H1 (cell line): ENCODE measurements at regions of chr10 and their contacts with region 1.

Region 1: GRCh38 chr10:119080521-119081260 is at the start of gene EIF3A:
- DNase-seq: peak; percentile 71 to 94
- H3K4me3 ChIP-seq: peak within 1 kb of the TSS; percentile 77 to 96 (median 90)
- H3K27ac ChIP-seq: peak within 1 kb of the TSS; percentile 97
- H3K4me1 ChIP-seq: peaks cover 0 to 3% (median 0%) of the 10 kb centered on the region in 4 experiments; a peak in 2 of 7 replicates
- H3K27me3 ChIP-seq: no peaks in the 10 kb centered on the region
- CTCF ChIP-seq: no peak
- EP300 ChIP-seq: no peak
- POLR2A ChIP-seq: peak; percentile 93
- RAD21 ChIP-seq: no peak
- total RNA-seq, gene EIF3A: 209 and 210 TPM in 2 replicates

Region 2: DNA sequence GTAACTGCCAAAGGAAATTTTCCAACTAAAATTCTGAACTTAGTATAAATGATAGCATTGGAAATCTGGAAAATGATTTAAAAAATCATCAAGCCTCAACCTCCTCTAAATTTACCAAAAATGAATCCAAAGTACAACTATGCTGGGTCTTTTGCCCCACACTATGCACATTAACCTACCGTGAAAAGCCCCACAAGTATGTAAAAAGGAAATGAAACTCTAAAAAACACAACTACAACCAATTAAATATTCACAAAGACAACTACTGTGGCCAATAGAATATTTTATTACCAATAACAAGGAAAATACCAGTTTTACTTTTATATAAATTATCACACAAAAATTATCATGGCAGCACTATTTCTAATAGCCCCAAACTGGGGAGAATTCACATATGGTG is 19.3 kb before region 1 on chr10:
- CTCF ChIA-PET with region 1: interaction called, 7 read pairs
- POLR2A ChIA-PET with region 1: interaction called, 21 read pairs
- DNase-seq: no peak
- H3K4me3 ChIP-seq: no peak overlapping the region
- H3K27ac ChIP-seq: no peak overlapping the region
- H3K4me1 ChIP-seq: no peaks in the 10 kb centered on the region
- H3K27me3 ChIP-seq: no peaks in the 10 kb centered on the region
- CTCF ChIP-seq: no peak
- EP300 ChIP-seq: no peak
- POLR2A ChIP-seq: no peak
- RAD21 ChIP-seq: no peak

Region 3: GRCh38 chr10:119090968-119091367 is 10.3 kb after region 1 on chr10:
- CTCF ChIA-PET with region 1: interaction called, 16 read pairs
- POLR2A ChIA-PET with region 1: interaction called, 15 read pairs
- DNase-seq: no peak
- H3K4me3 ChIP-seq: no peak overlapping the region
- H3K27ac ChIP-seq: no peak overlapping the region
- H3K4me1 ChIP-seq: no peaks in the 10 kb centered on the region
- H3K27me3 ChIP-seq: no peaks in the 10 kb centered on the region
- CTCF ChIP-seq: no peak
- EP300 ChIP-seq: no peak
- POLR2A ChIP-seq: no peak
- RAD21 ChIP-seq: no peak

Region 4: GRCh38 chr10:119103903-119104652 is 23.4 kb after region 1 on chr10 and contains the start of gene DENND10:
- CTCF ChIA-PET with region 1: interaction called, 5 read pairs
- POLR2A ChIA-PET with region 1: interaction called, 23 read pairs
- DNase-seq: peak; percentile 47 to 83
- H3K4me3 ChIP-seq: peak within 1 kb of the TSS; percentile 68 to 93 (median 88)
- H3K27ac ChIP-seq: peak within 1 kb of the TSS; percentile 58; the same call in 1 of the 2 replicates
- H3K4me1 ChIP-seq: peaks cover 0 to 3% (median 0%) of the 10 kb centered on the region in 4 experiments; a peak in 1 of 7 replicates
- H3K27me3 ChIP-seq: no peaks in the 10 kb centered on the region
- CTCF ChIP-seq: no peak
- EP300 ChIP-seq: no peak
- POLR2A ChIP-seq: peak; percentile 90 to 91
- RAD21 ChIP-seq: no peak
- total RNA-seq, gene DENND10: 61.6 and 64.4 TPM in 2 replicates